Astrocyte of the cerebellum (primary cell): ENCODE measurements at regions of chr6 and their contacts with region 1.

Region 1: GRCh38 chr6:34938268-34938667 is 49.2 kb downstream of the ANKS1A start:
- DNase-seq: no peak
- H3K4me3 ChIP-seq: no peak overlapping the region
- CTCF ChIP-seq: no peak

Region 2: DNA sequence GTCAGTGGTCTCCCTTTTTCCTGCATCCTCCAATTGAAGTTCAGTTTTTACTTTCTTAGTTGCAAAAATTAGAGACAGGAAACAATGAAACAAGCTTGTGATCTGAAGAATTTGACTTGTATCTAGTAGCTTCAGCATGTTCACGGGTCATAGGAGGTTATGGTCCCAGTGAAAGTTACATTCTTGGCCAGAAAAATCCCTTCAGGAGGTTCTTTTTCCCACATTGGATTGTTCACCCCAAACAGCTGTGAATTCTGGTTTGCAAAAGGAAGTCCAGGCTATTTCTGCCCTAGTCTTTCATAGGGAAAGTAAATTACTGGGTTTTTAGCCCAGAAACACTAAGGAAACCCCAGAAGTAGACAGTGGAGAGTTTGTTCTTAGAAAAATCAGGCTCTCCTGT is 41.1 kb before region 1 on chr6:
- in situ Hi-C with region 1: loop called (anchors 5 kb)
- DNase-seq: no peak
- H3K4me3 ChIP-seq: no peak overlapping the region
- CTCF ChIP-seq: no peak

Region 3: DNA sequence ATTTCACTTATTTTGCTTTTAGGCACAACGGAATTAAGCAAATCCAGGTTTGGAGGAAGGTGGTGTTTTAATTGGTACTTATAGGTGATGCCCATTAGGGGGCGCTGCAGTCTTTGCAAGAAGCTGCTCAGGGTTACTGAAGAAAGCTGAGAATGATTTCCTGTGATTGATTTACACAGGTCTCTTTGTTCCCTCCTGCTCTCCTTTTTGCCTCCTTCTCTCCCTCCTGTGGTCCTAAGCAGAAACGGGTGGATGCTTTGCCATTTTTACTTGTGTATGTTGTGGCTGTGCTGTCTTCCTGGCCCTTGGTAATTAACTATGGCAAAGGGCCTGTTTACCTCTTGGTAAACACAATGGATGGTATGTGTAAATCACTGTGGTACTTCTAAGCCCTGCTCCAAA is 48.6 kb after region 1 on chr6:
- in situ Hi-C with region 1: no loop called
- DNase-seq: peak; percentile 80
- H3K4me3 ChIP-seq: no peak overlapping the region
- CTCF ChIP-seq: peak; percentile 77